KBM-7 (cell line): ENCODE measurements at regions of chr13 and their contacts with region 1.

Region 1: DNA sequence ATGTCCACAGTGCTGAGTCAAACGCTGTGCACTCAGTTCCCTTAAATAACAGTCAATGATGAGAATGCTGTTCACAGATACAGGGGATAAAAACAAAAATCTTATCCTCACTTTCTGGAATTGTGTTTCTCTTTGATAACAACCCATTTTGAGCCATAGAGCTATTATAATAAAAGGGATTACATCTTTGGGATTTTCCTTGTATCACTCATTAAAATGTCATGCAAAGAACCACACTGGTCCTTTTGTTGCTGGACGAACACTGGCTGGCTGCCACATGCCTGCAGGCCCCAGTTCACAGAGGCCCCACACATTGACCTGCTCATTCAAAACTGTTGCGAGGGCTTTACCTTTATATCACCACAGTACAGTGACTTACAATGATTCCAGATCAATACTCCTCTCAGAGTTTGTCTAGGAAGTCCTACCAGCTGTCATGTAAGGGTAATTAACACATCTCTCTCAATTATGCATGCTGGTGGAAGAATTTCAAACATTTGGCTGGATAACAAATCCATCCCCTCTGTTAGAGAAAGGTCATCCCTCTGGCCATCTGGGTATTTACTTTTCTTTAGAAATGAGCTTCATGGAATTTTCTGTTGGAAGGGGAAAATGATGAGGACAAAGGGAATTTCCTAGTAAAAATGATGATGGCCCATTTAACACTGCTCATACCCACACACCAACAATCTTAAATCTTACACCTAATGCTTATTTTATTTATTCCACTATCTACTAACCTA is 85.9 kb downstream of the MBNL2 start:
- DNase-seq: no peak

Region 2: GRCh38 chr13:97221989-97222700 is 85.9 kb before region 1 on chr13 and contains the start of gene MBNL2:
- in situ Hi-C with region 1: loop called (anchors 25 kb)
- DNase-seq: peak; percentile 91